GM13976 (cell line): ENCODE measurements at regions of chr1 and their contacts with region 1.

Region 1: DNA sequence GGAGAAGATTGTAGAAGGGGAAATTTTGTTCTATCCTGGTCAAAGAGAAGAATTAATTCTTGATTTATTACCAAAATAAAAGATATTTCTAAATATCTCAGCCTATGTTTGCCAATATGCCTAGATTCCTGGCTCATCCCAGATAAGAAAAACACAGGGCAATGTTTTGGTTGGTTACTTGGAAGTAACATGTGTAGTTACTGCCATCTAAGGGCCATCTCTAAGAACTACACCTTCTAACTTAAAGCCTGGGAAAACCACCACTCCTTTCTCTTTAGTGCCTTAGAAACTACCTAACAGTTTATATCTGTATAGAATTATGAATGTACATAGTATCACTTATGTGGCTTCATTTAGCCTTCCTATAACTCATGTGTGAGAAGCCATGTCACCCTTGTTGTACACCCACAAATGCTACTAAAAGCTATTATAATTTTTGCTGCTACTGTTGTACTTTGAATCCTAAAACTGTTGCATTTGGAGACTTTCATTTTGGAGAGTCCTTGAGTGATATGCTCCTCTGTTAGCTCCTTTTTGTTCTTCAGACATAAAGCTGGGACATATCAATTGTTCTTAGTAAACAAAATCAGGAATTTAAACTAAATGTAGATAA is 4.5 kb downstream of the AIM2 start:
- DNase-seq: peak; percentile 29
- CTCF ChIP-seq: peak; percentile 54

Region 2: DNA sequence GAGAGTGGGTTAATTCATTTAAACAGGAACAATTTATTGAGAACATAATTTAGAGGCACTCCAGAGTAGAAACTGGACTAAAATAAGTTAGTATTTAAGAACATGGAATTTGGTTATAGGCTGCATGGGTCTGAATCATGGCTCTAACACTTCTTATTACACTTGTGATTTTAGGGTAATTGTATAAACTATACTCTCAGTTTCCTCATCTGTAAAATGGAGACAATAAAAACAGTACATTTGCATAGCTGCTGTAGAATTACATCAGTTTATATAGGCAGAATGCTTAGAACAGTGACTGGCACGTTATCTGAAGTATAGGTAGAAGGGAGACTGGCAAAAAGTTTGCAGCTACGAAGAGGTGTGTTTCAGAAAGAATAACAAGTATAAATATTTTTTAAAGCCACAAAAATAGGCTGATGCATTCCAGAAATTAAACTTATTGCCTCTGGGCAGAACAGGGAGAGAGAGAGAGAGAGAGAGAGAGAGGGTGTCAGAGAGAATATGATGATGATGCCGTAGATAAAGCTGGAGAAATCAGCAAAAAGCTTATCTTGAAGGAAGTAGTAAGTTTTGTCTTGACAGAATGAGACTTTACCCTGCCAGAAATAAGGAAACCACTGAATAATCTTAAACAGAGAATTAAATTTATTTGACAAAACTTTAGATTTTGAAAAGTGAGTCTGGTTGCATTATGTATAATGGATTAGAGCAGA is 343.4 kb before region 1 on chr1:
- in situ Hi-C with region 1: no loop called
- DNase-seq: no peak
- CTCF ChIP-seq: no peak

Region 3: GRCh38 chr1:158901623-158902022 is 170.5 kb before region 1 on chr1:
- in situ Hi-C with region 1: no loop called
- DNase-seq: no peak
- CTCF ChIP-seq: no peak

Region 4: DNA sequence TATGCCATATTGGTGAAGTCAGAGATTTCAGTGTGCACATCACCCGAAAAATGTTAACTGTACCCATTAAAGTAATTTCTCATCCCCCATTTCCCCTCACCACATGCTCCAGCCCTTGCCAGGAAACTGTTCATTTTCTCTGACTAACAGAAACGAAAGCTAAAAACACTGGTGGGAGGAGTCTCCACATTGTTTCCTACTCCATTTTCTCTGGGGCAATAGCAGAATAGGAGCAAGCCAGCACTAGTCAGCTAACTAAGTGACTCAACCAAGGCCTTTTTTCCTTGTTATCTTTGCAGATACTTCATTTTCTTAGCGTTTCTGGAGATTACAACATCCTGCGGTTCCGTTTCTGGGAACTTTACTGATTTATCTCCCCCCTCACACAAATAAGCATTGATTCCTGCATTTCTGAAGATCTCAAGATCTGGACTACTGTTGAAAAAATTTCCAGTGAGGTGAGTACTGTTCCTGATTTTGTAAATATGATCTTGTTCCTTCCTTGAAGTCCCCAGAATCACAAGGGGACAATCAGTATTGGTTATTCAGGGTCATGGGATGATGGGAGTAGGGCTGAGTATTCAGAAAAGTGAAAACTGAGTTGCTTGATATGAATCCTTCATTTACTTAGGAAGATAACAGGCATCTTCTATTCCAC is 62.2 kb before region 1 on chr1 and contains the start of gene IFI16:
- in situ Hi-C with region 1: loop called (anchors 5 kb)
- DNase-seq: peak; percentile 49
- CTCF ChIP-seq: no peak